Panc1 (cell line): ENCODE measurements at regions of chr15 and their contacts with region 1.

Region 1: GRCh38 chr15:89293012-89293411 is 41.6 kb downstream of the POLG start:
- DNase-seq: no peak
- ATAC-seq: no peak
- H3K4me3 ChIP-seq: no peak overlapping the region
- H3K27ac ChIP-seq: no peak overlapping the region
- H3K4me1 ChIP-seq: no peaks in the 10 kb centered on the region
- H3K27me3 ChIP-seq: no peaks in the 10 kb centered on the region
- CTCF ChIP-seq: no peak; the same call in 1 of the 2 replicates

Region 2: DNA sequence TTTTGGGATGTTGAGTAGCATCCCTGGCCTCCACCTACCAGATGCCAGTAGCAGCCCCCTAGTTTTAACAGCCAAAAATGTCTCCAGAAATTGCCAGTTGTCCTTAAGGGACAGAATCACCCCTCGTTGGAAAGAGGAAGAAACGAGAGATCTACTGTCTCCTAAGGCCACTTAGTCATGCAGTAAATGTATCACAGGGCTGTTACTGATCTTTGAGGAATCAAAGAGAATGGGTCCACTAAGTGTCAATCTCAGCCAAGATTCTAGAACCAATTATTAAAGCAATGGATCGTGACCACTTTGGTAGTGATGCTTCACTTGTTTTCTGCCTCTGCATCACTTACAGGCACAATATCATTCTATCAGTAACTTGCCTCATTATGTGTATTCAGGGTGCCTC is 15.2 kb after region 1 on chr15:
- CTCF ChIA-PET with region 1: no interaction called
- POLR2A ChIA-PET with region 1: interaction called, 10 read pairs
- in situ Hi-C with region 1: no loop called
- intact Hi-C with region 1: no loop called
- DNase-seq: no peak
- ATAC-seq: no peak
- H3K4me3 ChIP-seq: no peak overlapping the region
- H3K27ac ChIP-seq: no peak overlapping the region
- H3K4me1 ChIP-seq: no peaks in the 10 kb centered on the region
- H3K27me3 ChIP-seq: no peaks in the 10 kb centered on the region
- CTCF ChIP-seq: no peak